CD8-positive, alpha-beta T cell (primary cell): ENCODE measurements at regions of chr12 and their contacts with region 1.

Region 1: DNA sequence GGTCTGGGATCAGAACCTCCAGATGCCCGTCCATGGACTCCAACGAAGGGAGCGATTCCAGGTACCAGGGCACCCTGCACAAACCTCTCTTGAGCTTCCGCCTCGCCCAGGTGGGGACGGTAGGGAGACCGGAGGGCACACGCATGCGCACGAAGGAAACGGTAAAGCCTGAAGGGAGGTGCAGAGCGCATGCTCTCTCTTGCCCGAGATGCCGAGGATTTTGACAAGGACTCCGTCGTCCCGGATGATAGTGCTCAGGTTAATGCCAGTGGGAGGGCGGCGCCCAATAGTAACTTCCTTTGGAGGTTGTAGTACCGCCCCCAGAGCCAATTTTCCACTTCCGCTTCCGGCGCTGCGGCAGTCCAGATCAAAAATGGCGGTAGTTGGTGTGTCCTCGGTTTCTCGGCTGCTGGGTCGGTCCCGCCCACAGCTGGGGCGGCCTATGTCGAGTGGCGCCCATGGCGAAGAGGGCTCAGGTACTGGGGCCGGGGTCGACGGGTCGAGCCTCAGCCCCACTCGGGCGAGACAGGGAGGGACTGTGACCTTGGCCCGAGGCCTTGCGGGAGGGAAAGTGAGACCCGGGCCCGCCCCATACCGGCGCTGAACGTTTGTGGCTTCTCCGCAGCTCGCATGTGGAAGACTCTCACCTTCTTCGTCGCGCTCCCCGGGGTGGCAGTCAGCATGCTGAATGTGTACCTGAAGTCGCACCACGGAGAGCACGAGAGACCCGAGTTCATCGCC is at the start of gene COX6A1:
- DNase-seq: peak; percentile 91 to 100 (median 96)
- ATAC-seq: peak; percentile 95
- H3K4me3 ChIP-seq: peak within 1 kb of the TSS; percentile 74 to 76
- H3K4me3 Mint-ChIP-seq: peak within 1 kb of the TSS; percentile 88
- H3K27ac ChIP-seq: peak within 1 kb of the TSS; percentile 58 to 85
- H3K27ac Mint-ChIP-seq: peak within 1 kb of the TSS; percentile 91
- H3K4me1 ChIP-seq: peaks cover 26% of the 10 kb centered on the region
- H3K4me1 Mint-ChIP-seq: peaks cover 26% of the 10 kb centered on the region
- H3K27me3 ChIP-seq: no peaks in the 10 kb centered on the region
- H3K27me3 Mint-ChIP-seq: peaks cover 3% of the 10 kb centered on the region
- CTCF ChIP-seq: no peak
- total RNA-seq, gene COX6A1: 118 to 124 TPM

Region 2: DNA sequence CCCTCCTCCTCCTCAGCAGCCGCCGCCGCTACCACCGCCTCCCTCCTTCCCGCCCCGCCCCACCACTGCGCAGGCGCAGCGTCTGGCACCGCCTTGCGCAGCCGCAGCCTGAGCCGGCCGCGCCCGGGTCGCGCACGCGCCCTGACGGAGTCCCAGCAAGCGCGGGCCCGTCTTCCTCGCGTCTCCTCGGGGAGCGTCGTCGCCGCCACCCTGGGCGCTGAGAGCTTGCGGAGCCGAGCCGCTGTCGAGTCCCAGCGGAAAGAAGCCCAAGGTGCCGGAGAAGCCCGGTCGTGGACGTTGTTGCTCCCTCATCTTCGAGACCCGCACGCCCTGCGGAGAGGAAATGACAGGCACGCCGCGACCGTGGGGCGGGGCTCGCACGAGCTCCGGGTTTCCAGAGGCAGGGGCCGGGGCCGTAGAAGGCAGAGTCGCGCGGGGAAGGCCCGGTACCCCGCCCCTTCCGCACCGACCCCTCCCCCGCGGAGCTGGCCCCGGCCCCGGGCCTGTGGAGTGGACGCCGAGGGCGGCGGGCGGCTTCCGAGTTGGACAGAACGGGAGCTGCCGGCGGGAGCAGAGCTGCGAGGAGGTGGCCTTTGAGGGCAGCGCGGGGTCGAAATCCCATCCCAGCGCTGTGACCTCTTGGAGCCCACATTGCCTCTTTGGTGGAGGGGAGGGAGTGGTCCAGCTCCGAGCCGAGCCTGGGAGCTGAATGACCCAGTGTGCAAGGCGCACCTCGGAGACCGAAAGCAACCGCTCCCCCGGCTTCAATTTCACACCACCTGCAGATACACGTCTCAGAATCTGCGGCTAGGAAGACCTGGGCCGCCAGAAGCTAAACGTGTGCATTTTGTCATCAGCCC is 320.9 kb before region 1 on chr12:
- CTCF ChIA-PET with region 1: no interaction called
- POLR2A ChIA-PET with region 1: no interaction called
- intact Hi-C with region 1: loop called in 1 of 2 experiments (anchors 5 kb)
- DNase-seq: peak; percentile 95 to 99 (median 97)
- ATAC-seq: peak; percentile 84
- H3K4me3 ChIP-seq: peak overlapping the region; percentile 87 to 90
- H3K4me3 Mint-ChIP-seq: peak overlapping the region; percentile 84
- H3K27ac ChIP-seq: peak overlapping the region; percentile 91 to 95
- H3K27ac Mint-ChIP-seq: peak overlapping the region; percentile 88
- H3K4me1 ChIP-seq: peaks cover 53% of the 10 kb centered on the region
- H3K4me1 Mint-ChIP-seq: peaks cover 73% of the 10 kb centered on the region
- H3K27me3 ChIP-seq: no peaks in the 10 kb centered on the region
- H3K27me3 Mint-ChIP-seq: no peaks in the 10 kb centered on the region
- CTCF ChIP-seq: no peak

Region 3: DNA sequence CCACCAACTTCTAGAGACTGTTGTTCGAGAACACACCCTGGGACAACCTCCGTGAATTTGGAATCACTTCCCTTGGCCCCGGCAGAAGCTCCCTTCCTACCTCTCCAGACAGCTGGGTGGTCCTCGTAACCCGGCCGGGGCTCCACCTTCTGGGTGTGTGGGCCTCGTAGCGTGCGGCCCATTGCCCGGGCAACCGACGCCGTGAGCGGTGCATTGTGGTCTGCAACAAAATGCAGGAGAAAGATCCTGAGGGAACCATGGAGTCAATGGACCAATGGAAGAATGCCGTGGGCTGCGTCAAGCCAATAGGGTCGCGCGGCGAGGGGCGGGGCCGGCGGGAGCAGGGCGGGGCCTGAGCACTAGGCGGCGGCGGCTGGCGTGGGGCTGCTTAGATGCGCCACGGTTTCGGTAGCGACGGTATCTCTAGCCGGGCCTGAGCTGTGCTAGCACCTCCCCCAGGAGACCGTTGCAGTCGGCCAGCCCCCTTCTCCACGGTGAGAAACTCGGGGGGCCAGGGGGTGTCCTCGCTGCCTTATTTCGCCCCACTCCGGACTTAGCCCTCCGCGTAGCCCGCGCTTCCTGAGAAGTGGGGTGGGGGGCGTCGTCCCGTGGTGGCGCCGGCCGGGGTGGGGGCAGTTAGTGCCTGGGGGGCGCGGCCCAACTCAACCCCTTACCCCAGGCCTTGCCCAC is 57.9 kb after region 1 on chr12 and contains the start of gene DYNLL1:
- CTCF ChIA-PET with region 1: interaction called, 3 read pairs
- POLR2A ChIA-PET with region 1: interaction called, 8 read pairs
- intact Hi-C with region 1: loop called (anchors 1 kb)
- DNase-seq: peak; percentile 95 to 98 (median 97)
- ATAC-seq: peak; percentile 97
- H3K4me3 ChIP-seq: peak within 1 kb of the TSS; percentile 80 to 96
- H3K4me3 Mint-ChIP-seq: peak within 1 kb of the TSS; percentile 94
- H3K27ac ChIP-seq: peak within 1 kb of the TSS; percentile 79 to 84
- H3K27ac Mint-ChIP-seq: peak within 1 kb of the TSS; percentile 90
- H3K4me1 ChIP-seq: peaks cover 17% of the 10 kb centered on the region
- H3K4me1 Mint-ChIP-seq: peaks cover 32% of the 10 kb centered on the region
- H3K27me3 ChIP-seq: no peaks in the 10 kb centered on the region
- H3K27me3 Mint-ChIP-seq: no peaks in the 10 kb centered on the region
- CTCF ChIP-seq: no peak
- total RNA-seq, gene DYNLL1: 25.9 to 26.1 TPM

Region 4: GRCh38 chr12:120514002-120514401 is 76.1 kb after region 1 on chr12:
- CTCF ChIA-PET with region 1: no interaction called
- POLR2A ChIA-PET with region 1: no interaction called
- intact Hi-C with region 1: no loop called
- DNase-seq: no peak
- ATAC-seq: no peak
- H3K4me3 ChIP-seq: no peak overlapping the region
- H3K4me3 Mint-ChIP-seq: no peak overlapping the region
- H3K27ac ChIP-seq: no peak overlapping the region
- H3K27ac Mint-ChIP-seq: no peak overlapping the region
- H3K4me1 ChIP-seq: no peaks in the 10 kb centered on the region
- H3K4me1 Mint-ChIP-seq: no peaks in the 10 kb centered on the region
- H3K27me3 ChIP-seq: no peaks in the 10 kb centered on the region
- H3K27me3 Mint-ChIP-seq: no peaks in the 10 kb centered on the region
- CTCF ChIP-seq: no peak

Region 5: GRCh38 chr12:120640840-120641833 is 203.2 kb after region 1 on chr12:
- CTCF ChIA-PET with region 1: no interaction called
- POLR2A ChIA-PET with region 1: no interaction called
- intact Hi-C with region 1: loop called in 1 of 2 experiments (anchors 2 kb)
- DNase-seq: peak in 8 of 9 experiments; percentile 26 to 70 (median 60)
- ATAC-seq: peak; percentile 73
- H3K4me3 ChIP-seq: peak overlapping the region in 1 of 2 experiments; percentile 39
- H3K4me3 Mint-ChIP-seq: peak overlapping the region; percentile 80
- H3K27ac ChIP-seq: no peak overlapping the region
- H3K27ac Mint-ChIP-seq: no peak overlapping the region
- H3K4me1 ChIP-seq: peaks cover 12% of the 10 kb centered on the region
- H3K4me1 Mint-ChIP-seq: peaks cover 8% of the 10 kb centered on the region
- H3K27me3 ChIP-seq: peaks cover 13 to 23% of the 10 kb centered on the region in 2 experiments
- H3K27me3 Mint-ChIP-seq: peaks cover 48% of the 10 kb centered on the region
- CTCF ChIP-seq: no peak

Region 6: DNA sequence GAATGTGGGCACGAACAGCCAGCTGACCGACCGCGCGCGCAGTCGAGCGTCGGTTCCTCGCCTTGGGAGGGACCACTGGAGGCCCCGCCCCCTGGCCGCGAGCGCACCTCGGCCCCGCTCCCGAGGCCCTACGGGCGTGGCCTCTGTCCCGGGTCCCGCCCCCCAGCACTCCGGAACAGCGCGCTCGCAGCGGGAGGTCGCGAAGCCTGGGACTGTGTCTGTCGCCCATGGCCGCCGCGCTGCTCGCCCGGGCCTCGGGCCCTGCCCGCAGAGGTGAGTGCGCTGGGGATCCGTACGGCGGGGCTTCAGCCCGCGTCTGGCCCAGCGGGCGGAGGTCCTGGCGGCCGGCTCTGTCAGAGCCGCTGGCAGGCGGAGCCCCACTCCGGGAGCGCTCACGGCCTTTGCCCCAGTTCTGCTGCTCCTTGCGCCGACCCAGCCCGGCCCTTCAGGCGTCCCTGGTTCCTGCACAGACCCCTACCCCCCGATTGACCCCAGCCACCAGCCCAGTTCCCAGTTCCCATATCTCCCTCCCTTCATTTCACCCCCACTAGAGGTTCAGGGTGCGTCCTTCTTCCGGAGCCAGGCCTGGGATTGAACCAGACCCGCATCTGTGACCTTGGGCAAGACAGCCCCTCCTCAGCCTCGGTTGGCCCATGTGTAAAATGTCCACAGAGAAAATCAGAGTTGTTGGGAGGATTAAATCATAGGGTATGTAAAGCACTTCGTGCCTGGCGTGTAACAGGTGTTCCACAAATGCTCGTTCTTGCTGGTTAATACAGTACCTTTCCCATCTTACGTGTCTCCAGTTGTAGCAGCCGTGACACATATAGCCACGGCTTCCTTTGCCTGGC is 288.0 kb after region 1 on chr12 and contains the start of gene ACADS:
- CTCF ChIA-PET with region 1: no interaction called
- POLR2A ChIA-PET with region 1: no interaction called
- intact Hi-C with region 1: loop called in 1 of 2 experiments (anchors 5 kb)
- DNase-seq: peak; percentile 75 to 93 (median 89)
- ATAC-seq: peak; percentile 100
- H3K4me3 ChIP-seq: peak within 1 kb of the TSS; percentile 49 to 64
- H3K4me3 Mint-ChIP-seq: peak within 1 kb of the TSS; percentile 93
- H3K27ac ChIP-seq: peak within 1 kb of the TSS; percentile 37 to 56
- H3K27ac Mint-ChIP-seq: peak within 1 kb of the TSS; percentile 84
- H3K4me1 ChIP-seq: peaks cover 13% of the 10 kb centered on the region
- H3K4me1 Mint-ChIP-seq: peaks cover 24% of the 10 kb centered on the region
- H3K27me3 ChIP-seq: no peaks in the 10 kb centered on the region
- H3K27me3 Mint-ChIP-seq: no peaks in the 10 kb centered on the region
- CTCF ChIP-seq: no peak
- total RNA-seq, gene ACADS: 7.3 to 9.1 TPM